ENCODE measurements at regions of chr9 and their contacts with region 1.

Region 1: DNA sequence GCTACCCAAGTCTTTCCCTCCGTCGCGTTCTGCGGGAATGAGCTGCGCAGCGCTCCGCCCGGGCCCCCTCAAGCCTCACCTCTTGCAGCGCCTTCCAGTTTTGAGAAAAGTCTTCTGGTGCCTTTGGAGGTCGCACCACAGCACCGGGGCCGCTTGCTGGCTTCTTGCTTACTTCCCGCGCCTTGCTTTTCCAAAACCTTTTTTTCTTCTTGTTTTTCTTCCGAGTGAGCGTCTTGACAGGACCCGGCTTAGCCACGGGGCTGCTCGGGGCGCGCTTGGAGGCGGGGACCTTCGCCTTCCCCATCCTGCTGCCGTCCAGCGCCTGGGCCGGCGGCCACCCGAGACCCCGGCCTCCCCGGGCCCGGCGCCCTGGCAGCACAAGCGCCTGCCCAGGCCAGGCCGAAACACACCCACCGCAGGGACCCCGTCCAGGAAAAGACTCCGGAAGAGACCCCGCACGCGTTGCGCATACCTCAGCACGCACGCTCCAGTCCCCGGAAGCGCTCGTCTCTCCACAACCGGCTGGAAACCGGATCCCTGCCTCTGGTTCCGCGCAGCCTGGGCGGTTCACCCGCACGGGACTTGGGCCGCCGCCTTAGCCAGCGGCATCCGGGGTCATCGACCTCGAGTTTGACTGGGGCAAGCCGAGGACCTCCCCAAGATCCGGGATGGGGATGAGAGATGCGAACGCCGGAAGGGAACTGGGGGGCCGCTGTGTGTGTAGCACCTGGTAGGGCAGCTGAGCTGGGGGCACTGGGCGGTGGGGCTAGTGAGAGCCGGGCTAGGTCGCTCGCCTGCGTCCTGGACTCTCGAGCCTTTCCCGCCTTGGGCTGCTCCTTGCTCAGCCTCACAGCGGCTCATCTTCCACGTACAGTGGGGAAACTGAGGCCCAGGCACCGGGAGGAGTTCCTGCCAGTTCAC is at the start of gene REXO4:
- DNase-seq: peak; percentile 87
- H3K4me3 ChIP-seq: peak within 1 kb of the TSS; percentile 99
- H3K27ac ChIP-seq: peak within 1 kb of the TSS; percentile 97
- H3K4me1 ChIP-seq: no peaks in the 10 kb centered on the region
- H3K27me3 ChIP-seq: no peaks in the 10 kb centered on the region
- CTCF ChIP-seq: no peak
- total RNA-seq, gene REXO4: 17.3 to 38.6 TPM

Region 2: GRCh38 chr9:133459476-133460404 is 41.9 kb after region 1 on chr9 and contains the start of gene CACFD1:
- intact Hi-C with region 1: loop called (anchors 5 kb)
- DNase-seq: peak; percentile 99
- H3K4me3 ChIP-seq: peak within 1 kb of the TSS; percentile 58
- H3K27ac ChIP-seq: peak within 1 kb of the TSS; percentile 81
- H3K4me1 ChIP-seq: peaks cover 6% of the 10 kb centered on the region
- H3K27me3 ChIP-seq: no peaks in the 10 kb centered on the region
- CTCF ChIP-seq: no peak
- total RNA-seq, gene CACFD1: 56.8 to 60.7 TPM

Measured in colonic mucosa (tissue), 4 donors.